Activated CD4-positive, alpha-beta memory T cell treated with anti-CD3 and anti-CD28 coated beads for 36 hours (primary cell): ENCODE measurements at regions of chr2 and their contacts with region 1.

Region 1: GRCh38 chr2:237674731-237675276 is 47.4 kb downstream of the LRRFIP1 start:
- DNase-seq: peak; percentile 88
- H3K4me3 Mint-ChIP-seq: peak overlapping the region; percentile 78
- H3K27ac Mint-ChIP-seq: peak overlapping the region; percentile 86
- H3K4me1 Mint-ChIP-seq: peaks cover 44% of the 10 kb centered on the region
- H3K27me3 Mint-ChIP-seq: no peaks in the 10 kb centered on the region

Region 2: GRCh38 chr2:237581751-237582746 is 92.8 kb before region 1 on chr2:
- CTCF ChIA-PET with region 1: interaction called, 8 read pairs
- POLR2A ChIA-PET with region 1: no interaction called
- intact Hi-C with region 1: loop called (anchors 2 kb)
- DNase-seq: peak; percentile 80
- H3K4me3 Mint-ChIP-seq: no peak overlapping the region
- H3K27ac Mint-ChIP-seq: no peak overlapping the region
- H3K4me1 Mint-ChIP-seq: peaks cover 5% of the 10 kb centered on the region
- H3K27me3 Mint-ChIP-seq: no peaks in the 10 kb centered on the region

Region 3: DNA sequence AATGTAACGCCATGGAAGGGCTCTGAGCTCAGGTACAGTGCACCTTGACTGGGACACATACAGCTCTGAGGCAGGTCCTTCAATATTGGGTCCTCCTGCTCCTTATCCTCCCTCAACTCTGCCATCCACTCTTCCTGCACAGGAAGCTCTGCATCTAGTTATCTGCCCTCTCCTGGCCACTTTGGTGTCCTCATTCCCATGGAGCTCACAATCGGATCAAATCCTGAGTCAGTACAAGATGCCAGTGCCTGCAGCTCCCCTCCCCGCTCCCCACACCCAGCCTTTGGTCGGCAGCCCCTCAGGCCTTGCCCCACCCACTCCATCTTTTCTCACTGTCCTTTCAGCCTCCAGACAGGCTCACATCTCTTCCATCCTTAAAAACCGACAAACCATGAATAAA is 10.6 kb after region 1 on chr2:
- CTCF ChIA-PET with region 1: interaction called, 99 read pairs
- POLR2A ChIA-PET with region 1: interaction called, 169 read pairs
- intact Hi-C with region 1: loop called (anchors 1 kb)
- DNase-seq: peak; percentile 7
- H3K4me3 Mint-ChIP-seq: no peak overlapping the region
- H3K27ac Mint-ChIP-seq: no peak overlapping the region
- H3K4me1 Mint-ChIP-seq: peaks cover 41% of the 10 kb centered on the region
- H3K27me3 Mint-ChIP-seq: no peaks in the 10 kb centered on the region

Region 4: DNA sequence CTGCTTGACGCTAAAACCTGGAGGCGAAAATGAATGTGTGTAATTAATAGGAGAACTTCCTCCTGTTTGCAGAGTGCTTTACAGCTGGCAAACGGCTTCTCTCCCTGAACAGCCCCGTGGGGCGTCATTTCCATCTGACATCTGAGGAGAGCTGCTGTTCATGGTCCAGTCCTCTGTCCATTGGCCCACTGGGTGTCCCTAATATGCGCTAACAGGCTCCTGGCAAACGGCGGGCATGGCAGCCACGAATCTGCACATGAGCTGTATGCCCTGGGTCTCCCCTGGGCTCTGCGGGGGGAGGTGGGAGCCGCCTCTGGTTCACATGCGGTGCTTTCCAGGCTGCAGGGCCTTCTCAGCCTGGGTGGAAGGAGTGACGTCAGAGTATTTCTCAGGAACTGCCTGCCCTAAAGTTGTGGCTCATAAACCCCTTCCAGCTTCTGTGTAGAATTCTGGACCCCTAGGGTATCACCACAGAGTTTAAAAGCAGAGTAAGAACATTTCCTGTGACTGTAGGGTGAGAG is 25.8 kb after region 1 on chr2:
- CTCF ChIA-PET with region 1: interaction called, 64 read pairs
- POLR2A ChIA-PET with region 1: interaction called, 28 read pairs
- intact Hi-C with region 1: loop called (anchors 1 kb)
- DNase-seq: peak; percentile 90
- H3K4me3 Mint-ChIP-seq: peak overlapping the region; percentile 54
- H3K27ac Mint-ChIP-seq: peak overlapping the region; percentile 98
- H3K4me1 Mint-ChIP-seq: peaks cover 94% of the 10 kb centered on the region
- H3K27me3 Mint-ChIP-seq: no peaks in the 10 kb centered on the region

Region 5: GRCh38 chr2:237731663-237732062 is 56.9 kb after region 1 on chr2:
- CTCF ChIA-PET with region 1: interaction called, 19 read pairs
- POLR2A ChIA-PET with region 1: interaction called, 12 read pairs
- intact Hi-C with region 1: loop called (anchors 1 kb)
- DNase-seq: peak; percentile 81
- H3K4me3 Mint-ChIP-seq: peak overlapping the region; percentile 11
- H3K27ac Mint-ChIP-seq: peak overlapping the region; percentile 81
- H3K4me1 Mint-ChIP-seq: peaks cover 77% of the 10 kb centered on the region
- H3K27me3 Mint-ChIP-seq: no peaks in the 10 kb centered on the region

Region 6: DNA sequence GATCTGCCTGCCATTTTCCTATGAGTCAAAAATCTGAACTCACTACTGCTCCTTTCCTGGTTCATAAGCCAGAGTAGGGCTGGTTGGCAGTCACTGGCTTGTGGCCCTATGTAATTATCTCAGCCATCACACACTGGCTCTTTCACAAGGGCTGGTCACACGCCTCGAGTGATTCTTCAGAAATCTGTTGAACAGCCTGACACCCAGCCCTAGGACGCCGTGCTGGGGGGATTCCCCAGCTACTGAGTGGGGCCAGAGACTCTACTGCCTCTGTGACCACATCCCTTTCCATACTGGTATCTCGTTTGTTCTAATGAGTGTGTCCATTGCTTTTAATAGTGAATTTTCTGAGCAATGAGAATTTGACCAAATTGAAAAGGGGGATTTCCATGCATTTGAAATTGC is 78.0 kb after region 1 on chr2:
- CTCF ChIA-PET with region 1: interaction called, 192 read pairs
- POLR2A ChIA-PET with region 1: no interaction called
- intact Hi-C with region 1: no loop called
- DNase-seq: peak; percentile 65
- H3K4me3 Mint-ChIP-seq: no peak overlapping the region
- H3K27ac Mint-ChIP-seq: peak overlapping the region; percentile 53
- H3K4me1 Mint-ChIP-seq: peaks cover 20% of the 10 kb centered on the region
- H3K27me3 Mint-ChIP-seq: no peaks in the 10 kb centered on the region

Region 7: GRCh38 chr2:237966565-237967462 is 292.0 kb after region 1 on chr2 and contains the start of gene UBE2F:
- CTCF ChIA-PET with region 1: no interaction called
- POLR2A ChIA-PET with region 1: no interaction called
- intact Hi-C with region 1: loop called (anchors 5 kb)
- DNase-seq: peak; percentile 98
- H3K4me3 Mint-ChIP-seq: peak within 1 kb of the TSS; percentile 86
- H3K27ac Mint-ChIP-seq: peak within 1 kb of the TSS; percentile 77
- H3K4me1 Mint-ChIP-seq: peaks cover 40% of the 10 kb centered on the region
- H3K27me3 Mint-ChIP-seq: no peaks in the 10 kb centered on the region
- total RNA-seq, gene UBE2F: 50.7 to 52.9 TPM